GM12878 (cell line): ENCODE measurements at regions of chr22 and their contacts with region 1.

Region 1: GRCh38 chr22:28829358-28830181 is 29.2 kb upstream of the XBP1 start:
- DNase-seq: no peak
- ATAC-seq: peak; percentile 90
- H3K4me3 ChIP-seq: no peak overlapping the region
- H3K27ac ChIP-seq: no peak overlapping the region
- H3K4me1 ChIP-seq: peaks cover 4% of the 10 kb centered on the region
- H3K27me3 ChIP-seq: no peaks in the 10 kb centered on the region
- CTCF ChIP-seq: peak; percentile 96 to 98 (median 96)
- EP300 ChIP-seq: no peak
- POLR2A ChIP-seq: no peak
- RAD21 ChIP-seq: peak; percentile 99

Region 2: GRCh38 chr22:28043266-28043665 is 786.3 kb before region 1 on chr22:
- CTCF ChIA-PET with region 1: no interaction called
- POLR2A ChIA-PET with region 1: no interaction called
- RAD21 ChIA-PET with region 1: no interaction called
- SMC1A ChIA-PET with region 1: interaction called, 3 read pairs
- in situ Hi-C with region 1: loop called (anchors 10 kb)
- intact Hi-C with region 1: no loop called
- DNase-seq: no peak
- ATAC-seq: no peak
- H3K4me3 ChIP-seq: no peak overlapping the region
- H3K27ac ChIP-seq: no peak overlapping the region
- H3K4me1 ChIP-seq: no peaks in the 10 kb centered on the region
- H3K27me3 ChIP-seq: no peaks in the 10 kb centered on the region
- CTCF ChIP-seq: no peak
- EP300 ChIP-seq: no peak
- POLR2A ChIP-seq: no peak
- RAD21 ChIP-seq: no peak

Region 3: GRCh38 chr22:28600546-28601143 is 228.9 kb before region 1 on chr22:
- CTCF ChIA-PET with region 1: interaction called, 152 read pairs
- POLR2A ChIA-PET with region 1: no interaction called
- RAD21 ChIA-PET with region 1: interaction called, 67 read pairs
- SMC1A ChIA-PET with region 1: interaction called, 137 read pairs
- in situ Hi-C with region 1: loop called (anchors 5 kb)
- intact Hi-C with region 1: loop called (anchors 1 kb)
- DNase-seq: no peak
- ATAC-seq: peak; percentile 59
- H3K4me3 ChIP-seq: no peak overlapping the region
- H3K27ac ChIP-seq: no peak overlapping the region
- H3K4me1 ChIP-seq: no peaks in the 10 kb centered on the region
- H3K27me3 ChIP-seq: no peaks in the 10 kb centered on the region
- CTCF ChIP-seq: peak; percentile 23 to 63 (median 37); a peak in 4 of 6 replicates
- EP300 ChIP-seq: no peak
- POLR2A ChIP-seq: no peak
- RAD21 ChIP-seq: peak; percentile 87

Region 4: DNA sequence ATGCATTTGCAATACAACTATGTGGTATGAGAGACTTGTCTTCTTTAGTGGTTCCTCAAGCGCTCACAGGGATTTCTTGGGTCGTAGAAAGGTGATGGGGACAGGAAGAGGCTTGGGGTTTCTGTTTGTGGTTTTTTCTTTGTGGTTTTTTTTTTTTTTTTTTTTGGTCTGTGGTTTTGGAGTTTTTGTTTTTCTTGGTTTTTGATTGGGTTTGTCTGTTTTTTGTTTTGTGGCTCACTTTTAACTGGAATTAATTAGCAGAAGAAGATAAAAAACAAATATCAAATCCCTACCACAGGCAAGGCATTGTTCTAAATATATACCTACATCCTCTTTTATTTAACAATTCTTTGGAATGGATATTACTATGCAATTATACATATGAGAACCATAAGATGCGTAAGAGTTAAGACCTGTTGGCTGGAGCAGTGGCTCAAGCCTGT is 155.4 kb before region 1 on chr22:
- CTCF ChIA-PET with region 1: interaction called, 3 read pairs
- POLR2A ChIA-PET with region 1: no interaction called
- RAD21 ChIA-PET with region 1: no interaction called
- SMC1A ChIA-PET with region 1: no interaction called
- in situ Hi-C with region 1: no loop called
- intact Hi-C with region 1: loop called (anchors 10 kb)
- DNase-seq: peak; percentile 40
- ATAC-seq: peak; percentile 84
- H3K4me3 ChIP-seq: no peak overlapping the region
- H3K27ac ChIP-seq: no peak overlapping the region
- H3K4me1 ChIP-seq: peaks cover 3% of the 10 kb centered on the region
- H3K27me3 ChIP-seq: peaks cover under 1 to 6% of the 10 kb centered on the region in 2 experiments
- CTCF ChIP-seq: no peak
- EP300 ChIP-seq: peak in 1 of 2 experiments; percentile 66; a peak in 1 of 4 replicates
- POLR2A ChIP-seq: no peak
- RAD21 ChIP-seq: no peak

Region 5: GRCh38 chr22:28791841-28792490 is 37.6 kb before region 1 on chr22:
- CTCF ChIA-PET with region 1: interaction called, 126 read pairs
- POLR2A ChIA-PET with region 1: interaction called, 3 read pairs
- RAD21 ChIA-PET with region 1: interaction called, 69 read pairs
- SMC1A ChIA-PET with region 1: interaction called, 95 read pairs
- in situ Hi-C with region 1: no loop called
- intact Hi-C with region 1: loop called (anchors 1 kb)
- DNase-seq: peak; percentile 80
- ATAC-seq: peak; percentile 77
- H3K4me3 ChIP-seq: no peak overlapping the region
- H3K27ac ChIP-seq: peak overlapping the region; percentile 64
- H3K4me1 ChIP-seq: peaks cover 46% of the 10 kb centered on the region
- H3K27me3 ChIP-seq: no peaks in the 10 kb centered on the region
- CTCF ChIP-seq: no peak
- EP300 ChIP-seq: peak in 1 of 2 experiments; percentile 82; a peak in 3 of 4 replicates
- POLR2A ChIP-seq: no peak
- RAD21 ChIP-seq: no peak

Region 6: DNA sequence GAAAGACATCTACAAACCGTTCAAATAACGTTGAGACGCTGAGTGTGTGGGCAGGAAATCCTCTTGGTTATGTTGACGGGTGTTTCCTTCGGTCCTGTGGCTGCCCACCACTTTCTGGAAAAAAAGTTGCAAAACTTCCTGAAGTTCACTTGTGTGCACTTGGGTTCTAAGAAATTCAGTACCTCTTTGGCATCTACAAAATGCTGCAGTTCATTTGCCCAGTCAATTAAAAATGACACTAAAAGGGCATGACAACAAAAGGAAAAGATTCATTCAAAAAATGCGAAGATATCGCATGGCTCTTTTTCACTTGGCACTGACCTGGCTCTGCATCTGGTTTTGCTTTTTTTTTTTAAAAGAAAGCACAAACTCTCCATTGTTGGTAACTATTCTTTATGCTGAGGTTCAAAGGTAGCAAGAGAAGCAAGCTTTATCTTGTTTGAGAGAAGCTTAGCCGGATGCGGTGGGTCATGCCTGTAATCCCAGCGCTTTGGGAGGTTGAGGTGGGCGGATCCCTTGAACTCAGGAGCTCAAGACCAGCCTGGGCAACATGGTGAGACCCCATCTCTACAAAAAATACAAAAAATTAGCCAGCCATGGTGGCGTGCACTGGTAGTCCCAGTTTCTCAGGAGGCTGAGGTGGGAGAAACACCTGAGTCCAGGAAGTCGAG is 18.6 kb before region 1 on chr22:
- CTCF ChIA-PET with region 1: interaction called, 14 read pairs
- POLR2A ChIA-PET with region 1: interaction called, 4 read pairs
- RAD21 ChIA-PET with region 1: interaction called, 8 read pairs
- SMC1A ChIA-PET with region 1: interaction called, 26 read pairs
- in situ Hi-C with region 1: no loop called
- intact Hi-C with region 1: no loop called
- DNase-seq: no peak
- ATAC-seq: peak; percentile 34
- H3K4me3 ChIP-seq: no peak overlapping the region
- H3K27ac ChIP-seq: peak overlapping the region; percentile 51; the same call in 1 of the 2 replicates
- H3K4me1 ChIP-seq: peaks cover 21% of the 10 kb centered on the region
- H3K27me3 ChIP-seq: no peaks in the 10 kb centered on the region
- CTCF ChIP-seq: no peak
- EP300 ChIP-seq: no peak
- POLR2A ChIP-seq: no peak
- RAD21 ChIP-seq: no peak

Region 7: GRCh38 chr22:28846994-28847393 is 17.4 kb after region 1 on chr22:
- CTCF ChIA-PET with region 1: interaction called, 9 read pairs
- POLR2A ChIA-PET with region 1: no interaction called
- RAD21 ChIA-PET with region 1: no interaction called
- SMC1A ChIA-PET with region 1: interaction called, 13 read pairs
- in situ Hi-C with region 1: no loop called
- intact Hi-C with region 1: no loop called
- DNase-seq: no peak
- ATAC-seq: no peak
- H3K4me3 ChIP-seq: no peak overlapping the region
- H3K27ac ChIP-seq: no peak overlapping the region
- H3K4me1 ChIP-seq: no peaks in the 10 kb centered on the region
- H3K27me3 ChIP-seq: no peaks in the 10 kb centered on the region
- CTCF ChIP-seq: no peak
- EP300 ChIP-seq: no peak
- POLR2A ChIP-seq: no peak
- RAD21 ChIP-seq: no peak

Region 8: DNA sequence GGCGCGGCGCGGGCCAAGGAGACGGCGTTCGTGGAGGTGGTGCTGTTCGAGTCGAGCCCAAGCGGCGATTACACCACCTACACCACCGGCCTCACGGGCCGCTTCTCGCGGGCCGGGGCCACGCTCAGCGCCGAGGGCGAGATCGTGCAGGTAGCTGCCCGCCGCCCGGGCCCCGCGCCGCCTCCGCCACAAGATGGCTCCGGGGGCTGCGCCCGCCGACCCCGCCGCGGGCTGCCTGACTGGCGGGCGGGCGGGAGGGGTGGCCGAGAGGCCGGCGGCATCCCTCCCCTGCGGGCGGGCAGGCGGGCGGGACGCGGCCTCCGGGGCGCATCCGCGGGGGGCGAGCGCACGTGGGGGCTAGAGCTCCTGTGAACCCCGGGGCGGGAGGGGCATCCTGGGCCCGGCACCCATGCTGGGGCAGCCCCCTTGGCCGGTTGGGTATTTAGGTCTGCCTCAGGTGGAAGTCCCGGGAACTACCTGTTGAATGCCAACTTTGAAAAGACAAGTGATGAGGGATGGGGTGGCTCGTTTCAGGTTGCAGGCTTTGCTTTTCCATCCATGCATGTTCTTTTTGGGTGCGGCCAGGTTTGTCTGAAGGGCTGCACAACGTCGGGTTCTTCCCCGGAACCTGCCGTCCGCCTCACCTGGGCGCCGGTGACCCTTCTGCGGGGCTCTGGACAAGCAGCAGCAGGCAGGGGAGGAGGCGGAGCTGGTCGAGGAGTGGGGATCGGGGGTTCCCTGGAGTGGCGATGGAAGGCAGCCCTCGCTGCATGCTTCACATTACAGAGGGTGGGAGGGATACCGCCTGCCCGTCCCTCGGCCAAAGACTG is 54.6 kb after region 1 on chr22:
- CTCF ChIA-PET with region 1: no interaction called
- POLR2A ChIA-PET with region 1: no interaction called
- RAD21 ChIA-PET with region 1: no interaction called
- SMC1A ChIA-PET with region 1: no interaction called
- in situ Hi-C with region 1: no loop called
- intact Hi-C with region 1: no loop called
- DNase-seq: no peak
- ATAC-seq: peak; percentile 14
- H3K4me3 ChIP-seq: no peak overlapping the region
- H3K27ac ChIP-seq: no peak overlapping the region
- H3K4me1 ChIP-seq: no peaks in the 10 kb centered on the region
- H3K27me3 ChIP-seq: peaks cover 0 to 5% of the 10 kb centered on the region in 2 experiments; a peak in 1 of 4 replicates
- CTCF ChIP-seq: 0 out of 6 replicates have a peak, but pooled peaks of 1 of the 3 experiments have one; percentile 16
- EP300 ChIP-seq: no peak
- POLR2A ChIP-seq: no peak
- RAD21 ChIP-seq: no peak

Region 9: GRCh38 chr22:28930357-28931007 is 100.9 kb after region 1 on chr22:
- CTCF ChIA-PET with region 1: no interaction called
- POLR2A ChIA-PET with region 1: no interaction called
- RAD21 ChIA-PET with region 1: no interaction called
- SMC1A ChIA-PET with region 1: no interaction called
- in situ Hi-C with region 1: no loop called
- intact Hi-C with region 1: no loop called
- DNase-seq: no peak
- ATAC-seq: peak; percentile 84
- H3K4me3 ChIP-seq: no peak overlapping the region
- H3K27ac ChIP-seq: no peak overlapping the region
- H3K4me1 ChIP-seq: no peaks in the 10 kb centered on the region; the same call in 1 of the 2 replicates
- H3K27me3 ChIP-seq: peaks cover 0 to 6% of the 10 kb centered on the region in 2 experiments; a peak in 1 of 4 replicates
- CTCF ChIP-seq: no peak
- EP300 ChIP-seq: no peak
- POLR2A ChIP-seq: no peak
- RAD21 ChIP-seq: no peak